PC-3 (cell line): ENCODE measurements at regions of chr13 and their contacts with region 1.

Region 1: GRCh38 chr13:106536244-106537034 is 977 bp upstream of the EFNB2 start:
- DNase-seq: peak; percentile 85
- ATAC-seq: peak; percentile 27
- H3K4me3 ChIP-seq: peak overlapping the region; percentile 79
- H3K27ac ChIP-seq: no peak overlapping the region
- H3K4me1 ChIP-seq: peaks cover 6% of the 10 kb centered on the region; the same call in 1 of the 2 replicates
- H3K27me3 ChIP-seq: no peaks in the 10 kb centered on the region
- CTCF ChIP-seq: peak; percentile 89

Region 2: DNA sequence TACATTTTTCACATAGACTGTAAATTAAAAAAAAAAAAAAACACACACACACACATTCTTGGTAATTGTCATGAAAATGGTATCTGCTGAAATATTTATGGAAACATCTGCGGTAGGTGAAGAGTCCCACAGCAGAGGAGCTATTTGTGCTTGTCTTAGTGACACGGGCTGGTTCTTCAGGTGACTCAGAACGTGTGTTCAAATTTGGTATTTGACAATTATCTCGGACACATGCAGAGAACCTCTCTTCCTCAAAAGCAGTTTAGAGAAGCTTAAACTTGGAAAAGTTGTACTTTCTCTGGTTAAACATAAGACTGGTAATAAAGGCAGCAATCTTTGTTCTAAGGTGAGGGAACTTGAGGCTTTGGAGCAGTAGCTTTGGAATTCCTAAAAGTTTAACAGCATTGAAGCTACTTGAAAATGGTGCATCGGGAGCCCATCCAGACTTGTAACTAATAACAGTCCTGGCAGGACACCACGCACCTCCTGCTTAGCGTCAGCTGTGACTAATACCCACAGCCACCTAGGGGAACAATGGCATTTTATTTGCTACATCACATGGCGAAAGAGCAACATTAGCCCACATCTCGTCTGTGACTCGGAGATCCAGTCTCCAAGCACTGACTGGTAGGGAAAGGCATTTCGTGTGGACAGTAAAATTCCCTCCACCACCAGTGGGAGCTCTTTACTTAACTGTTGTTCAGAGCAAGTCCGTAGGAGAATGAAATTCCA is 1965.1 kb before region 1 on chr13:
- CTCF ChIA-PET with region 1: interaction called, 4 read pairs
- POLR2A ChIA-PET with region 1: no interaction called
- intact Hi-C with region 1: loop called (anchors 1 kb)
- DNase-seq: peak; percentile 90
- ATAC-seq: peak; percentile 96
- H3K4me3 ChIP-seq: peak overlapping the region; percentile 55
- H3K27ac ChIP-seq: peak overlapping the region; percentile 68
- H3K4me1 ChIP-seq: peaks cover 17% of the 10 kb centered on the region
- H3K27me3 ChIP-seq: no peaks in the 10 kb centered on the region
- CTCF ChIP-seq: peak; percentile 66

Region 3: DNA sequence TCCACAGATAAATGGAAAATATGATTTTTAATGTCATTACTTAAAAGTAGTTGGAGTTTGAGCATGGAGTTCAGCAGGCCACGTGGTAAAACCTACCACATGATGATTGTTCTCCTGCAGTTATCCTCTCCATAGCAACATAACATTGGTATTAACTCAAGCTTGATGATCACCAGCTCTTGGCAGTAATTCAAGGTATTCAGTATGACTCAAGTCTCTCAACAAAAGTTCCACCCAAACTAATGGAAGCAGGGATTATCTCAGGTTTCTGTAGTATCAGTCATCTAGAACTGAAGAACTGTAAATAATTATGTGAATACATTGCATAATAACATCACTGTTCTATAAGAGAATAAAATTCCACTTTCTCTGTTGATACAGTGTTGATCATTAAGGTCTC is 1093.5 kb before region 1 on chr13:
- CTCF ChIA-PET with region 1: no interaction called
- POLR2A ChIA-PET with region 1: no interaction called
- intact Hi-C with region 1: loop called (anchors 5 kb)
- DNase-seq: peak; percentile 95
- ATAC-seq: peak; percentile 92
- H3K4me3 ChIP-seq: no peak overlapping the region
- H3K27ac ChIP-seq: peak overlapping the region; percentile 80
- H3K4me1 ChIP-seq: peaks cover 25% of the 10 kb centered on the region
- H3K27me3 ChIP-seq: no peaks in the 10 kb centered on the region
- CTCF ChIP-seq: no peak

Region 4: DNA sequence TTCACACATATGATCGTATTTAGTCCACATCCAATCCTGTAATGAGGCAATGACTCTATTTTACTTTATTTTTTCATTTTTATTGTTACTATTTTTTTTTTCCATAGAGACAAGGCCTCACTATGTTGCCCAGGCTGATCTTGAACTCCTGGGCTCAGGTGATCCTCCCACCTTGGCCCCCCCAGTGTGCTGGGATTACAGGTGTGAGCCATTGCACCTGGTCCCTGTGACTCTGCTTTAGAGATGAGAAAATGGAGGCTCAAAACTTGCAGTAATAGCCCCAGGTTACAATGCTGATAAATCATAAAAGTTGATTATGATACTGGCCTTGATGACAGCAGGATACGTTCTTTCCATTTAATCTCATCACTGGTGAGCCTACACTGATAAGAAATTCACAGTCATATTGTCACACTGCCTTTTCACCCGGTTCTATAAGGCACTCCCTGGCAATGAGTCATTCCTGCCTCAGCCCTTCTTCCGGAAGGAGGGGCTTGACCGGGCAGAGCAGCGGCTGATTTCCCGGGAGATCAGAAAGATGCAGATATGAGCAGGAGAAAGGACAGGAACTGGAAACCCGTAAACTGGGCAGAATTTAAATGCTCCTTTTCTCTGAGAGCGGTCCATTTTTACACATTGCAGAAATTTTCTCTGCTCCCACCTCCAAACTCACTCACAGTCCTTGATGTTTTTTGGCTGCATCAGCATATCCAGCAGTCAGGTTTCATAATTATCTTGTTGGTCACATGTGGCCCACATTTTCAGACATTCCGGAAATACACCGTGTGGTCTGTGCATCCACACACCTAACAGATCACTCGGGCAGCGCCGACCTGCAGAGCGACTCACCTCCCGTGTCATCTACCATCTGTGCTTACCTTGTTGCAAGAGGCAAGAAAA is 617.3 kb before region 1 on chr13:
- CTCF ChIA-PET with region 1: no interaction called
- POLR2A ChIA-PET with region 1: interaction called, 5 read pairs
- intact Hi-C with region 1: loop called (anchors 2 kb)
- DNase-seq: peak; percentile 90
- ATAC-seq: peak; percentile 91
- H3K4me3 ChIP-seq: peak overlapping the region; percentile 54
- H3K27ac ChIP-seq: peak overlapping the region; percentile 99
- H3K4me1 ChIP-seq: peaks cover 29% of the 10 kb centered on the region
- H3K27me3 ChIP-seq: no peaks in the 10 kb centered on the region
- CTCF ChIP-seq: no peak

Region 5: GRCh38 chr13:106133025-106133424 is 403.4 kb before region 1 on chr13:
- CTCF ChIA-PET with region 1: interaction called, 5 read pairs
- POLR2A ChIA-PET with region 1: no interaction called
- intact Hi-C with region 1: loop called (anchors 2 kb)
- DNase-seq: peak; percentile 43
- ATAC-seq: peak; percentile 38
- H3K4me3 ChIP-seq: no peak overlapping the region
- H3K27ac ChIP-seq: no peak overlapping the region
- H3K4me1 ChIP-seq: peaks cover 41% of the 10 kb centered on the region
- H3K27me3 ChIP-seq: no peaks in the 10 kb centered on the region
- CTCF ChIP-seq: no peak

Region 6: DNA sequence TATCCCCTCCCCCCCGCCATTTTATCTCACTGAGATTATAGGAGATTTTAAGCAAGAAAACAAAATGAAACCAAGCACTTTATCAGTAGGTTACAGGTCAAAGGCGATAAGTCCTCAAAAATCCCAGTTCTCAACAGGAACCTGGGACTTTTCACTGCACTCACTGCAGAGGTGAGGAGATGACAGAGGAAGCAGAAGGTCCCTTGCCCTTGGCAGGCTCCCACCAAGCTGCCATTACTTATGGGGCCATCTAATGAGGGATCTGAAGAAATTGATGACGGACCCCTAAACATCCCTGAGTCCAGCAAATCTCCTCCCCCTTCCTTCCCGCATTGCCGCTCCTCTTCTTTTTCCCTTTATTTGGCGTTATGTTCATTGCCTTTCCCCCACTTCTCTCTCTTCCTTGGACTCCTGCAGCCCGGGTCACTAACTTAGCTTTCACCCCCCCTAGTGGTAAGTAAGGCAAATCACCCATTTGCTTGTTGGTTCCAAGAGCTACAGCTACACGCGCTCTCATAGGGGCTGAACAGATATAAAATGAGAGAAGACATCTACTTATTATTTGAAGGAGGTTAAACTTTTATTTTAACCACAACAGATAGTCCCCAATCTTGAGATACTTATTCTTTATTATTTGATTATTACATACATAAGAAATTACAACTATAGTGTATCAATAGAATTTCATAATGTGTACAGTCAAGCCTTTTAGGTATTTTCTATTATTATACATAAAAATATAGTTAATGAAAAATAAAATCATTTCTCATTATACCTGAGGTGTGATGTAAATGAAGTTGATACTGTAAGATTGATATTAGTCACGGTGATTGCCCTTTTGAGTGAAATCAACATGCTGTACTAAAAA is 83.5 kb after region 1 on chr13:
- CTCF ChIA-PET with region 1: interaction called, 7 read pairs
- POLR2A ChIA-PET with region 1: no interaction called
- intact Hi-C with region 1: loop called (anchors 1 kb)
- DNase-seq: peak; percentile 49
- ATAC-seq: peak; percentile 95
- H3K4me3 ChIP-seq: no peak overlapping the region
- H3K27ac ChIP-seq: no peak overlapping the region
- H3K4me1 ChIP-seq: no peaks in the 10 kb centered on the region
- H3K27me3 ChIP-seq: peaks cover 46% of the 10 kb centered on the region
- CTCF ChIP-seq: peak; percentile 70